ENCODE measurements at regions of chr3 and their contacts with region 1.

Region 1: GRCh38 chr3:16448639-16449070 is 64.8 kb downstream of the RFTN1 start:
- DNase-seq: peak; percentile 59
- H3K4me3 ChIP-seq: no peak overlapping the region
- H3K27ac ChIP-seq: no peak overlapping the region
- H3K4me1 ChIP-seq: no peaks in the 10 kb centered on the region
- H3K27me3 ChIP-seq: no peaks in the 10 kb centered on the region
- CTCF ChIP-seq: no peak
- POLR2A ChIP-seq: no peak

Region 2: DNA sequence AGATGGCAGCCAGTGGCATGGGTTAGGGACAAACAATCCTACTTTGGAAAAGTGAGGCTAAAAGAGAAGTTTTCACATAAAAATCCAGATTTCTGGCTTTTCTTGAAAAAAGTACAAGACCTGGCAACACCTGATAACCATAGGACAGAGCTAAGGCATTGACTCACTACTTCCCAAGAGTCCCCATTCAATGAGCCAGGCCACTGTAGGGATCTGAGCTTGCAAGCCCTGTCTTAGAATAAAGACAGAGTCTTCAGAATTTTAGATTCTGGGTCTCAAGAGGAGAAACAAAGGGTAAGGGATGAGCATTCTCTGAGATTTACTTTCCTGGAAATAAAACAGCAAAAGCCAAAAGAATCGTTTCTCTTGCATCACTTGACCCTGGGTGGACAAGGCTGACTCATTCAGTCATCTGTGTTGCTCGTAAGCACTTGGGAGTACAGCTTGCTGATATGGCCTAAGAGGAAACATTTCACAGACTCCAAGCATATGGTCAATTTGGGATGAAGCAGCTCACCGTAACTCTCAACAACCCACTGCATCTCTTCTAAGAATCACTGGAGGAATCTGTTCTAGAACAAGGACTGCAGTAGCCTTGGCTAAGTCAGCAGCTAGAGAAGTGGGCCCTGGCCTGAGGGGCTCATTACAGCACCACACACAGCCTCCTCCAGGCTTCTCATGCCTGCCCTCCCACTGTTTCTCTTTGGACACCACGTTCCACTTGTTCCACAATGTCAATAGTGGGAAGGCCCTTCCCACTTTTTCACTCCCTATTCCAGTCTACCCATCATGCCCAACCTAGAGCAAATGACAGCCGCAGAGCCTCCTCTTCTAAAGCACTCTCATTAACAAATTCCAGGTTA is 21.3 kb before region 1 on chr3:
- CTCF ChIA-PET with region 1: no interaction called
- POLR2A ChIA-PET with region 1: no interaction called
- dilution Hi-C with region 1: no loop called
- intact Hi-C with region 1: no loop called
- DNase-seq: no peak
- H3K4me3 ChIP-seq: no peak overlapping the region
- H3K27ac ChIP-seq: no peak overlapping the region
- H3K4me1 ChIP-seq: no peaks in the 10 kb centered on the region
- H3K27me3 ChIP-seq: no peaks in the 10 kb centered on the region
- CTCF ChIP-seq: no peak
- POLR2A ChIP-seq: no peak

Region 3: GRCh38 chr3:16466822-16467221 is 18.2 kb after region 1 on chr3:
- CTCF ChIA-PET with region 1: no interaction called
- POLR2A ChIA-PET with region 1: no interaction called
- dilution Hi-C with region 1: no loop called
- intact Hi-C with region 1: no loop called
- DNase-seq: no peak
- H3K4me3 ChIP-seq: no peak overlapping the region
- H3K27ac ChIP-seq: no peak overlapping the region
- H3K4me1 ChIP-seq: peaks cover 22% of the 10 kb centered on the region
- H3K27me3 ChIP-seq: no peaks in the 10 kb centered on the region
- CTCF ChIP-seq: no peak
- POLR2A ChIP-seq: no peak

Region 4: DNA sequence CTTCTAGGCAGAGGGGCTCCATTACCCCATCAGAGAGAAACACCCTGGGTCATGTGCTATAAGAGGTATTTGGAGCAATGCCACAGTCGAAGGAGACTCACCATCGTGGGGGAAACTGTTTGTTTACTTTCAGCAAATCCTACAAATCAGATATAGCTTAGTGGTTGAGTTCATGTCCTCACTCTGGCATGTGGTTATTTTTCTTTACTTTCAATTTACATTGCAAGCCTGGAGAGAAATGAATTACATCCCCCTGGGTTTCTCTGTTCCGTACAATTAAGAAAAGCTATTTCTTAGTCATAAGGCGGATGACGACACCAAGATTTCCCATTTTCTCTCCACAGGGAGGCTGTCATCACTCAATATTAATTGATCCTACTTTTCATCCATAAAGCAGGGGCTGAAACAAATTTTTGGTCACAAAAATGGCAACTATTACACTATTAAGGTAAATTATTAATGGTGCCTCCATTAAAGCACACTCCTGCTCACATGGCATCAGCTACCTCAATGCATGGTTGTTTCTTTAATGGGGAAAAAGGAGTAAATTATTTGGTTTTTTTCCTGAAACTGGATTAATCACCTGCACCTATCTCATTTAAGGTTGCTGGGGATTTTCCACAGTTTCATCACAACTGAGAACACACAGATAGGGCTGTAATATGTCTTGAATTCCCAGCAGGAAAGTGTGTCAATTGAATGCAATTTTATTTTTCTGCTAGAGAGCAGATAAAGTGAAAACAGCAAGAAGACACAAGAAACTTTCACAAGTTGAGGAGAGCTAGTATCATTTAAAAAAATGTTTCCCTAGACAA is 28.2 kb after region 1 on chr3:
- CTCF ChIA-PET with region 1: no interaction called
- POLR2A ChIA-PET with region 1: no interaction called
- dilution Hi-C with region 1: no loop called
- intact Hi-C with region 1: loop called (anchors 2 kb)
- DNase-seq: peak; percentile 90
- H3K4me3 ChIP-seq: no peak overlapping the region
- H3K27ac ChIP-seq: peak overlapping the region; percentile 42
- H3K4me1 ChIP-seq: peaks cover 52% of the 10 kb centered on the region
- H3K27me3 ChIP-seq: no peaks in the 10 kb centered on the region
- CTCF ChIP-seq: no peak
- POLR2A ChIP-seq: no peak

Region 5: DNA sequence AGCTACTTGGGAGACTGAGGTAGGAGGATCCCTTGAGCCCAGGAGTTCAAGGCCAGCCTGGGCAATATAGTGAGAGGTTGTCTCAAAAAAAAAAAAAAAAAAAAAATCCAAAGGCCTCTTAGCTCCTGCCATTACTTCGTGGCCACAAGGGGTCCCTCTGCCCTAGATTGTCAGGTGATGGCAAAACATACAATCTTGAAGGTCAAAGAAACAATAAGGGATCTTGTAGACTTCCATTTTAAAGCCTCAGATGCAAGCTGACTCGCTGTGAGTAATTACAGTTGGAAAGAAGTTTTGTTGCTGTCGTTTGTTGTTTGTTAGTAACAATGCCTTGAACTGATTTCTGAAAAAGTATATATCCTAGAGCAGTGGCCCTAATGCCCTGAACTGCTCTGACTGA is 380.2 kb after region 1 on chr3:
- CTCF ChIA-PET with region 1: no interaction called
- POLR2A ChIA-PET with region 1: no interaction called
- dilution Hi-C with region 1: no loop called
- intact Hi-C with region 1: no loop called
- DNase-seq: peak; percentile 80
- H3K4me3 ChIP-seq: no peak overlapping the region
- H3K27ac ChIP-seq: peak overlapping the region; percentile 63
- H3K4me1 ChIP-seq: peaks cover 6% of the 10 kb centered on the region
- H3K27me3 ChIP-seq: no peaks in the 10 kb centered on the region
- CTCF ChIP-seq: peak; percentile 63 to 66
- POLR2A ChIP-seq: no peak

Measured in endothelial cell of umbilical vein (primary cell).